ENCODE measurements at regions of chr1 and their contacts with region 1.

Region 1: DNA sequence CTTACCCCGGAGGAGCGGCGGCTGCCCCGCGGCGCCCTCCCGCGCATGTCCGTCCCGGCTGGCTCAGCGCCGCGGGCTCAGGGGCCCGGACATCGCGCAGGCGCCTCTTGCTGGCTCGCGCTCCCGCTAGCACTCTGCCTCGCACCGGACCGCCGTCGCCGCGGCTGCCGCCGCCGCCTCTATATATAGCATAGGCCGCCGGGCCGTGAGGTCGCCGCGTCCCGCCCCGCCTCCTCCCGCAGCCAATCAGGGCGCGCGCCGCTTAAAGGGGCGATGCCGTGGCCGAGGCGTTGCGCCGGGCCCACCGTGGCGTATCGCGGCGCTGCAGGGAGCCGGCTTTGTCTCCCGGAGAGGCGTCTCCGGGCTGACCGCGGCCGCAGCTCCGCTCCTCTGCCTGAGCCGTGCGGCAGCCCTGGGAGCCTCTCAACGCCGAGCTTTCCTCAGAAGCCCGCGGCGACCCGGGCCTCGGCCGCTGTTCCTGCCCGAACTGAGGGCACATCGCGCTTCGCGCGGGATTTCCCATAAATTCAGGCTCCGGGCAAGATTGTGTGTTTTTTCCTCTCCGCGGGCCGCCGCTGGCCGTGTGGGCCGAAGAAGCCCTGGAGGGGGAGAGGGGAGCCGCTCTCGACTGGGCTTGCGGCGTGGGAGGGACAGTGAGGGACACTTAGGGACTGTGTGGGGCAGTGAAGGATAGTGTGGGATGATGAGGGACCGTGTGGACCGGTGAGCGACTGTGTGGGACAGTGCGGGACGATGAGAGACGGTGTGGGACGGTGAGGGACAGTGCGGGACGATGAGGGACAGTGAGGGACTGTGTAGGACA is at the start of gene ERRFI1:
- DNase-seq: peak; percentile 93 to 99 (median 96)

Region 2: GRCh38 chr1:7961216-7962015 is 64.9 kb before region 1 on chr1 and contains the start of gene PARK7:
- intact Hi-C with region 1: loop called (anchors 5 kb)
- DNase-seq: peak; percentile 99 to 100 (median 100)

Region 3: GRCh38 chr1:8314346-8315280 is 288.2 kb after region 1 on chr1:
- intact Hi-C with region 1: loop called (anchors 2 kb)
- DNase-seq: peak; percentile 57 to 96 (median 79)